ENCODE measurements at regions of chr2 and their contacts with region 1.

Region 1: GRCh38 chr2:162301151-162301804 is 17.2 kb downstream of the IFIH1 start:
- DNase-seq: peak; percentile 62
- H3K4me3 Mint-ChIP-seq: no peak overlapping the region
- H3K27ac Mint-ChIP-seq: no peak overlapping the region
- H3K4me1 Mint-ChIP-seq: no peaks in the 10 kb centered on the region
- H3K27me3 Mint-ChIP-seq: no peaks in the 10 kb centered on the region

Region 2: DNA sequence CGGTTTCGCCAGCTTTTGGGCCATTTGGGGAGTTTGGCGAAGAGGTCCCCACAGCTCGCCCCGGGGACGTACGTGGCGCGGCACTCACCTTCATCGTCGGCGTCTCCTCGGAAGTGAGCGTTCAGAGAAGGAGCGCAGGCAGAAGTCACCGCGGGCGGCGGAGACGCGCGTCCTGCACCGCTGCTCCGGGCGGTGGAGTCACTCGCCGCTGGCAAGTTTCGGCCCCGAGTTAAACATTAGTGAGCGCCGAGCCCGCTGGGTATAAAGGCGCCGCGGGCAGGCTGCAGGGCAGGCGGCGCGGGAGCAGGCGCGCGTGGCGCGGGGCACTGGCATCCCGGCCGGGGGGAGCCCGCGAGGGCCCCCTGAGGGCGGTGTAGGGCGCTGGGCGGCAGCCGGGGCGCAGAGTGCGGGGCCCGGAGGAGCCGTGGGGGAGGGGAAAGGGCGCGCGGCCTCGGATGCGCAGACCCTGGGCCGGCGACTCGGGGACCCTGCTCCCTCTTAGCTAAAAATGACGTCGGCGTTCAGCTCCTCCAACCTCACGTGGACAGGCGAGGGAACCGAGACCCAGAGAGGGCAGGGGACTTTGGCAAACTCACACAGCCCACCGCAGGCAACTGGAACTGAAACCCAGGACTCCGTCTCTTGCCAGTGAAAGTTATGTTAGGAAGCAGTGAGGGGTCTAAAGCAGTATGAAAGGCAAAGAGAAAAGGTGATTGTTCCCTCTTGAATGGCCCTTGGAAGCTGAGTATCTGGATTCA is 227.2 kb before region 1 on chr2 and contains the start of gene DPP4:
- CTCF ChIA-PET with region 1: no interaction called
- DNase-seq: peak; percentile 71
- H3K4me3 Mint-ChIP-seq: peak within 1 kb of the TSS; percentile 97
- H3K27ac Mint-ChIP-seq: peak within 1 kb of the TSS; percentile 94
- H3K4me1 Mint-ChIP-seq: peaks cover 53% of the 10 kb centered on the region
- H3K27me3 Mint-ChIP-seq: no peaks in the 10 kb centered on the region

Region 3: DNA sequence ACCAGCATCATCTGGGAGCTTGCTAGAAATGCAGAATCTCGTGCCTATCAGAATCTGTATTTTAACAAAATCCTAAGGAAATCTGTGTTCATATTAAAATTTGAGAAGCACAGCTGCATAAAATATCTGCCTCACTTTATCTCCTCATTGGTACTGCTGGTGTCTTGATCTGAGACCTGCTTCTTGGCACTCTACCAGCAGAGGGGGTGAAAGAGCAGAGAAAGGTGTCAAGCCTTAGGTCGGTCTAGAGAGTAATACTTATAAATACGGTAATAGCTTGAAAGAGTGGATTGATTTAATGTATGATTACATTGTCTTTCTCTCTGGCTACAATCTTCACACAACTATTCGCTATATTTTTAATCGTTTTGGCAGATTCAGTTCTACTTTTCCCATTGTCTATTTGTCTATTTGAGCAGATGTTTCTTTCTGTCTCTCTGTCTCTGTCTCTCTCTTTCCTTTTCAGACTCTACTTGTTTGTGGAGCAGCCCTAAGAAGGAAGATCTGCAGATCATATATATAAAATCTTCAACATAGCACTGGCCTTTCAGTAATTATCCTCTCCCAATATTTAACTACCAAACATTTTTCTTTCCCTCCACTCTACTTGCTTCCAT is 147.6 kb before region 1 on chr2:
- CTCF ChIA-PET with region 1: interaction called, 24 read pairs
- DNase-seq: peak; percentile 73
- H3K4me3 Mint-ChIP-seq: no peak overlapping the region
- H3K27ac Mint-ChIP-seq: no peak overlapping the region
- H3K4me1 Mint-ChIP-seq: no peaks in the 10 kb centered on the region
- H3K27me3 Mint-ChIP-seq: peaks cover 12% of the 10 kb centered on the region

Measured in activated naive CD4-positive, alpha-beta T cell treated with anti-CD3 and anti-CD28 coated beads, Interleukin-2, amount 10 ng/mL, durations not matched to agents 7 days and 5 days (primary cell).